ENCODE measurements at regions of chr15 and their contacts with region 1.

Region 1: GRCh38 chr15:88620995-88621772 is at the start of gene AEN:
- DNase-seq: peak; percentile 99
- H3K4me3 Mint-ChIP-seq: peak within 1 kb of the TSS; percentile 94
- H3K27ac Mint-ChIP-seq: peak within 1 kb of the TSS; percentile 93
- H3K4me1 Mint-ChIP-seq: peaks cover 42% of the 10 kb centered on the region
- H3K27me3 Mint-ChIP-seq: peaks cover under 1% of the 10 kb centered on the region
- total RNA-seq, gene AEN: 72.4 and 75.7 TPM in 2 replicates

Region 2: GRCh38 chr15:88467073-88467934 is 153.9 kb before region 1 on chr15 and contains the starts of genes MRPL46 and MRPS11:
- intact Hi-C with region 1: loop called (anchors 2 kb)
- DNase-seq: peak; percentile 97
- H3K4me3 Mint-ChIP-seq: peak within 1 kb of the TSS; percentile 93
- H3K27ac Mint-ChIP-seq: peak within 1 kb of the TSS; percentile 97
- H3K4me1 Mint-ChIP-seq: peaks cover 33% of the 10 kb centered on the region
- H3K27me3 Mint-ChIP-seq: no peaks in the 10 kb centered on the region
- total RNA-seq, gene MRPL46: 49.1 and 51.9 TPM in 2 replicates
- total RNA-seq, gene MRPS11: 68.7 and 72.6 TPM in 2 replicates

Region 3: GRCh38 chr15:88590759-88591158 is 30.4 kb before region 1 on chr15:
- intact Hi-C with region 1: no loop called
- DNase-seq: no peak
- H3K4me3 Mint-ChIP-seq: no peak overlapping the region
- H3K27ac Mint-ChIP-seq: no peak overlapping the region
- H3K4me1 Mint-ChIP-seq: no peaks in the 10 kb centered on the region
- H3K27me3 Mint-ChIP-seq: peaks cover 20% of the 10 kb centered on the region

Region 4: GRCh38 chr15:88638626-88639372 is 17.6 kb after region 1 on chr15 and contains the start of gene ISG20:
- intact Hi-C with region 1: loop called (anchors 1 kb)
- DNase-seq: peak; percentile 98
- H3K4me3 Mint-ChIP-seq: peak within 1 kb of the TSS; percentile 89
- H3K27ac Mint-ChIP-seq: peak within 1 kb of the TSS; percentile 96
- H3K4me1 Mint-ChIP-seq: peaks cover 64% of the 10 kb centered on the region
- H3K27me3 Mint-ChIP-seq: no peaks in the 10 kb centered on the region
- total RNA-seq, gene ISG20: 33.9 and 35.5 TPM in 2 replicates

Region 5: GRCh38 chr15:88681610-88682221 is 60.5 kb after region 1 on chr15:
- intact Hi-C with region 1: no loop called
- DNase-seq: no peak
- H3K4me3 Mint-ChIP-seq: no peak overlapping the region
- H3K27ac Mint-ChIP-seq: no peak overlapping the region
- H3K4me1 Mint-ChIP-seq: no peaks in the 10 kb centered on the region
- H3K27me3 Mint-ChIP-seq: peaks cover 8% of the 10 kb centered on the region

Region 6: GRCh38 chr15:88897456-88898194 is 276.4 kb after region 1 on chr15:
- intact Hi-C with region 1: loop called (anchors 2 kb)
- DNase-seq: peak; percentile 95
- H3K4me3 Mint-ChIP-seq: no peak overlapping the region
- H3K27ac Mint-ChIP-seq: no peak overlapping the region
- H3K4me1 Mint-ChIP-seq: peaks cover 31% of the 10 kb centered on the region
- H3K27me3 Mint-ChIP-seq: no peaks in the 10 kb centered on the region

Region 7: GRCh38 chr15:88982304-88982945 is 361.2 kb after region 1 on chr15:
- intact Hi-C with region 1: no loop called
- DNase-seq: no peak
- H3K4me3 Mint-ChIP-seq: no peak overlapping the region
- H3K27ac Mint-ChIP-seq: no peak overlapping the region
- H3K4me1 Mint-ChIP-seq: no peaks in the 10 kb centered on the region
- H3K27me3 Mint-ChIP-seq: no peaks in the 10 kb centered on the region

Region 8: GRCh38 chr15:89575146-89575655 is 954.0 kb after region 1 on chr15 and contains the start of gene TICRR:
- intact Hi-C with region 1: loop called (anchors 5 kb)
- DNase-seq: peak; percentile 99
- H3K4me3 Mint-ChIP-seq: peak within 1 kb of the TSS; percentile 91
- H3K27ac Mint-ChIP-seq: peak within 1 kb of the TSS; percentile 88
- H3K4me1 Mint-ChIP-seq: peaks cover 29% of the 10 kb centered on the region
- H3K27me3 Mint-ChIP-seq: peaks cover 22% of the 10 kb centered on the region
- total RNA-seq, gene TICRR: 18.8 and 21.0 TPM in 2 replicates